Panc1 (cell line): ENCODE measurements at regions of chr12 and their contacts with region 1.

Region 1: DNA sequence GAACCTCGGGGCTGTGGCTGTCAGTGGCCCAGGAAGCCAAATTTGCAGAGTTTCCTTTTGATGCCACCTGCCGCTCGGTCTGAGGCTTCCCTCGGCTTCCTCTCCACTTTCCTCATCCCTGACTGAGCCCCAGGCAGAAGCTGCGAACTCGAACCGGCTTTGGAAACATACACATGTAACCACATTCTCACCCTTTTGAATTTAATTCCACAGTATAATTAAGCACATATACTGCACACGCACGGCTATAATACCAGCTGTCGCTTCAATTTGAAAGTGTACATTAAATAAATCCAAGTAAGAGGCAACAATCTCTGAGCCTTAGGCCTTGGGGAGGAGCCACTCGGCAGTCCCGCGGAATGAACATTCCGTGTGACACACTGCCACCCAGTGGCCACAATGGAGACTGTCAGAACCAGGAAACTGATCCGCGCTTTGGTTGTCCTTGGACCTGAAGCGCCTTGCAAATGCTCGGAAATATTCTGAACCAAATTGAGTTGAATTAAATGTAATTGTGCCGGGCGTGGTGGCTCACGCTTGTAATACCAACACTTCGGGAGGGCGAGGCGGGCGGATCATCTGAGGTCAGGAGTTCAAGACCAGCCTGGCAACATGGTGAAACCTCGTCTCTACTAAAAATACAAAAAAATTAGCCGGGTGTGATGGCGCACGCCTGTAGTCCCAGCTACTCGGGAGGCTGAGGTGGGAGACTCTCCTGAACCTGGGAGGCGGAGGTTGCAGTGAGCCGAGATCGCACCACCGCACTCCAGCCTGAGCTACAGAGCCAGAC is 117.9 kb upstream of the TMPO start:
- DNase-seq: peak; percentile 41
- ATAC-seq: peak; percentile 99
- H3K4me3 ChIP-seq: peak overlapping the region; percentile 32 to 59
- H3K27ac ChIP-seq: no peak overlapping the region
- H3K4me1 ChIP-seq: peaks cover 3% of the 10 kb centered on the region; the same call in 1 of the 2 replicates
- H3K27me3 ChIP-seq: no peaks in the 10 kb centered on the region
- CTCF ChIP-seq: peak; percentile 91

Region 2: GRCh38 chr12:96578526-96579125 is 1818.9 kb before region 1 on chr12:
- CTCF ChIA-PET with region 1: no interaction called
- POLR2A ChIA-PET with region 1: no interaction called
- in situ Hi-C with region 1: no loop called
- intact Hi-C with region 1: loop called (anchors 10 kb)
- DNase-seq: no peak
- ATAC-seq: peak; percentile 82; the same call in 1 of the 2 replicates
- H3K4me3 ChIP-seq: no peak overlapping the region
- H3K27ac ChIP-seq: no peak overlapping the region
- H3K4me1 ChIP-seq: no peaks in the 10 kb centered on the region
- H3K27me3 ChIP-seq: peaks cover 5% of the 10 kb centered on the region; the same call in 1 of the 2 replicates
- CTCF ChIP-seq: peak; percentile 67; the same call in 1 of the 2 replicates

Region 3: GRCh38 chr12:98408681-98409080 is 11.2 kb after region 1 on chr12:
- CTCF ChIA-PET with region 1: no interaction called
- POLR2A ChIA-PET with region 1: no interaction called
- in situ Hi-C with region 1: no loop called
- intact Hi-C with region 1: no loop called
- DNase-seq: no peak
- ATAC-seq: no peak
- H3K4me3 ChIP-seq: no peak overlapping the region
- H3K27ac ChIP-seq: no peak overlapping the region
- H3K4me1 ChIP-seq: no peaks in the 10 kb centered on the region
- H3K27me3 ChIP-seq: peaks cover 3% of the 10 kb centered on the region; the same call in 1 of the 2 replicates
- CTCF ChIP-seq: no peak